ENCODE measurements at regions of chr16 and their contacts with region 1.

Region 1: DNA sequence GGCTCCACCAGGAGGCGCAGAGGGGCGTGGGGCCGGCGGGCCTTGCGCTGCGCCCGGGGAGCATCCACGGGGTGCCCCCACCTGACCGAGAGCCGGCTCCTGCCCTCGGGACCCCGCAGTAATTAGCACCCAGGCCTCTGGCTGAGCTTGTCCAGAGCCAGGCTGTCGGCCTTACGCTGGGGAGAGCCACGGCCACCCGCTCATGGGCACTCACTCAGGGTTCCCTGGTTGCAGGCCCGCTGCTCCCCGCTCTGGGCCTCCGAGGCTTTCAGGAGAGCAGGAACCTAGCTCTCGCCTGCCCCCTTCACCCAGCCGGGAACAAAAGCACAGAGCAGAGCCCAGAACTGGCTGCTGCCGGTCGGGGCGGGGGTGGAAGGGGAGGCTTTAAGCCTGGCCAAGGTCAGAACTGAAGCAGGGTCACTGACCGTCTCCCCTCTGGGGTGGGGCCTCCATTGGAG is 12.2 kb downstream of the GLIS2 start:
- DNase-seq: peak; percentile 88
- ATAC-seq: peak; percentile 87

Region 2: GRCh38 chr16:4081521-4082021 is 246.5 kb before region 1 on chr16:
- intact Hi-C with region 1: no loop called
- DNase-seq: no peak
- ATAC-seq: peak; percentile 55

Region 3: DNA sequence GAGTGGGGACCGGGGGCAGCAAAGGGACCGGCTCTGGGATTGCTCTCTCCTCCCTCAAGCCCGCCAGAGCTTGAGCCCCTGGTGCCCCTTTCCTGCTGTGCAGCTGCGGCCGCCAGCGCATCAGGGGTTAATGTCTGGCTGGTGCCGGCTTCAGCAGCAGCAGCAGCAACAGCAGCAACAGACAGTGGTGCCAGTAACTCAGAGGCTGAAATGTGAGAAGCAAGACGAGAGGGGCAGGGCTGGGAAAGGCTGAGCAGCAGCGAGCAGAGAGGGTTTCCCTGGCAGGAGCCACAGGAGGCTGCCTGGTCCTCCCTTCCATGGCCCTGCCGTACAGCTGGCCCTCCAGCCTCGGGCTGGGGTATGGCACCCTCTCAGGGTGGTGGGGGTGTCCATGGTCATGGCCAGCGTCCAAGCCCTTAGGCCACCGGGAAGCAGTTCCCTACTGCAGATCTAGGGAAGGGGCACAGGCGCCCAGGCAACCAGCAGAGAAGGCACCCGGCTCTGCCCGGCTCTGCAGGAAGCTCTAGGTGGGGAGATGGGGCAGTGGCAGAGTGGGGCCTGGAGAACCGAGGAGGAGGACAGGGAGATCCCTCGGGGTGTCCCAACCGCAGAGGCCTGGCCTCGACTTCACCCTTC is 34.1 kb before region 1 on chr16:
- intact Hi-C with region 1: loop called (anchors 5 kb)
- DNase-seq: peak; percentile 72
- ATAC-seq: peak; percentile 86

Measured in sciatic nerve (tissue), 2 donors.